ENCODE measurements at regions of chr1 and their contacts with region 1.

Region 1: GRCh38 chr1:44553771-44554170 is 120.5 kb downstream of the TMEM53 start:
- DNase-seq: no peak
- ATAC-seq: peak; percentile 91
- H3K4me3 ChIP-seq: no peak overlapping the region
- H3K27ac ChIP-seq: no peak overlapping the region
- H3K4me1 ChIP-seq: peaks cover 11% of the 10 kb centered on the region
- H3K27me3 ChIP-seq: no peaks in the 10 kb centered on the region
- CTCF ChIP-seq: no peak

Region 2: GRCh38 chr1:44012941-44013609 is 540.7 kb before region 1 on chr1:
- CTCF ChIA-PET with region 1: no interaction called
- POLR2A ChIA-PET with region 1: no interaction called
- in situ Hi-C with region 1: no loop called
- intact Hi-C with region 1: no loop called
- DNase-seq: no peak
- ATAC-seq: no peak
- H3K4me3 ChIP-seq: no peak overlapping the region
- H3K27ac ChIP-seq: no peak overlapping the region
- H3K4me1 ChIP-seq: no peaks in the 10 kb centered on the region
- H3K27me3 ChIP-seq: no peaks in the 10 kb centered on the region
- CTCF ChIP-seq: no peak

Region 3: DNA sequence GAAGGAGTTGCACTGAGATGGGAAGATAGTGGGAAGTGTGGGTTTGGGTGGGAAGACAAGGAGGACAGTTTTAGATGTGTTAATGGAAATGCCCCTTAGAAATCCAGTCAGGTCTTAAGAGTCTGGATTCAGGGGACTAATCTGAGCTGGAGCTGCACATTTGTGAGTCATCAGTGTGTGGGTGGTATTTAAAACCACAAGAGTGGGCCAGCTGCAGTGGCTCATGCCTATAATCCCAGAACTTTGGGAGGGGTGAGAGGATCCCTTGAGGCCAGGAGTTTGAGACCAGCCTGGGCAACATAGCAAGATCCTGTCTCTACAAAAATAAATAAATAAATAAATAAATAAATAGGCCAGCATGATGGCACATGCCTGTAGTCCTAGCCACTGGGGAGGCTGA is 481.6 kb before region 1 on chr1:
- CTCF ChIA-PET with region 1: no interaction called
- POLR2A ChIA-PET with region 1: no interaction called
- in situ Hi-C with region 1: no loop called
- intact Hi-C with region 1: no loop called
- DNase-seq: no peak
- ATAC-seq: no peak
- H3K4me3 ChIP-seq: no peak overlapping the region
- H3K27ac ChIP-seq: no peak overlapping the region
- H3K4me1 ChIP-seq: no peaks in the 10 kb centered on the region
- H3K27me3 ChIP-seq: no peaks in the 10 kb centered on the region
- CTCF ChIP-seq: no peak

Region 4: GRCh38 chr1:44405041-44405797 is 148.6 kb before region 1 on chr1 and contains the start of gene RNF220:
- CTCF ChIA-PET with region 1: no interaction called
- POLR2A ChIA-PET with region 1: no interaction called
- in situ Hi-C with region 1: no loop called
- intact Hi-C with region 1: no loop called
- DNase-seq: no peak
- ATAC-seq: peak; percentile 83
- H3K4me3 ChIP-seq: peak within 1 kb of the TSS; percentile 84 to 87
- H3K27ac ChIP-seq: peak within 1 kb of the TSS; percentile 82
- H3K4me1 ChIP-seq: peaks cover 25% of the 10 kb centered on the region
- H3K27me3 ChIP-seq: no peaks in the 10 kb centered on the region
- CTCF ChIP-seq: no peak; the same call in 1 of the 2 replicates
- total RNA-seq, gene RNF220: 64.9 TPM

Region 5: DNA sequence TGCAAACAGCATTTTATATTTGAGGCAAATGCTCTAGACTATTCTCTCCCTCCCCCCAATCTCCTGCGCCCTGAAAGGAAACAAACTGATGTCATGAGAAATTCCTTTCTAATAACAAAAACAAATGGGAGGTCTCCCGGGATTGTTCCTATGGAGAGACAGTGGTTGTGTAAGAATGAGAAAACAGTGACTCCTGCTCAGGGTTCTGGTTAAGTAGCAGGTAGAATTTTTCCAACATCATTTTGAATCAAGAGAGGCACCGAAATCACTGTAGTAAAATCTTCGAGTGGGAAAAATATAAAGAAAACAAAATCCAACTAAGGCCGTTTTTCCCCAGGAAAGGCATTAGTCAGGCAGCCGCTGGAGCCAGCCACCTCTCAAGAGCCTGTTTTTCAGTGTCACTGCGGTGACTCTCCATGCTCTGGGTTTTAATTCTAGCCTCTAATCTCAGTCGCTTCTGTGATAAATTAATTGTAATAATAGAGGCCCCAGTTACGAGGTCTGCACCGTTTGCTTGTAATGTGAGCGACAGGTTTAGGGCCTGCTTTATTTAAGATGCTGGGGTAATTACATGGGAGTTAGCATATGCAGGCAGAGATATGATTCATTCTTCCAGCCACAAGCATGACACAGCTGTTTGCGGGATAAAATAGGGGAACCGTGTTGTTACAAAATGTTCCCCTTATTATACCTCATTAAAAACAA is 68.4 kb before region 1 on chr1:
- CTCF ChIA-PET with region 1: no interaction called
- POLR2A ChIA-PET with region 1: interaction called, 12 read pairs
- in situ Hi-C with region 1: no loop called
- intact Hi-C with region 1: no loop called
- DNase-seq: peak; percentile 43
- ATAC-seq: peak; percentile 81
- H3K4me3 ChIP-seq: no peak overlapping the region
- H3K27ac ChIP-seq: peak overlapping the region; percentile 62
- H3K4me1 ChIP-seq: peaks cover 15% of the 10 kb centered on the region
- H3K27me3 ChIP-seq: no peaks in the 10 kb centered on the region
- CTCF ChIP-seq: no peak

Region 6: DNA sequence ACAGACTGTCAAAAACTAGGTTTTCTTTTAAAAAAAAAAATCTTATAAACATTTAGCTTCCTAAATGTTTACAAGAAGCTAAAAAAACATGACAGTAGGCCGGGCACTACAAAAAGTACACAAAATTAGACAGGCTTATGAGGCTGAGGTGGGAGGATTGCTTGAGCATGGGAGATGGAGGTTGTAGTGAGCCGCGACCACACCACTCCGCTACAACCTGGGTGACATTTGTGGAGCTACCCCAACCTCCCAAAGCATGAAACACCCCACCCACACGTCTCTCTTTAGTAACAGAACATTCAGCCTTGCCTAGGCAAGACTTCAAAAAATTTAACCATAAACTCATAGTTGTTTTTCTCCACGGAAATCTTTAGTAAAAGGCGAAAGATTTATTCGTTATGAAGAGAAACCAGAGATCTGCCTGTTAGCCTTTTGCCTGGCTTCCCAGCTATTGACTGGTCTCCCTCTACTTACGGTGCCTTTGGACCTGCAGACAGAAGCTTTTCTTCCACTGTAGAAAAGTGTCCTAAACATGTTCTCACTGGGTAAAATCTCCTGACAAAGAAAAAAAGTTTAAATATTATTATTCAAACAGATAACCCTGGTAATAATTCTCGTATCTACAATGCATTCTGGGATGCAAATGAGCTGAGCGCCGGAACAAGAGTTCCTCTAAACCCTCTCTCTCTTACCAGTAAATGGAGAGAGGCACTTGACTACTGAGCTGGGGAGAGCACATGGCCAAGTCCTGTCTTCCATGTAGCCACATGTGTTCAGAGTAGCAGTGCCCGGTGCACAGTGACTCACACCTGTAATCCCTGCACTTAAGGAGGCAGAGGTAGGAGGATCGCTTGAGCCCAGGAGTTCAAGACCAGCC is 168.0 kb after region 1 on chr1:
- CTCF ChIA-PET with region 1: no interaction called
- POLR2A ChIA-PET with region 1: no interaction called
- in situ Hi-C with region 1: no loop called
- intact Hi-C with region 1: no loop called
- DNase-seq: peak; percentile 98
- ATAC-seq: peak; percentile 98
- H3K4me3 ChIP-seq: no peak overlapping the region
- H3K27ac ChIP-seq: peak overlapping the region; percentile 97
- H3K4me1 ChIP-seq: peaks cover 7% of the 10 kb centered on the region
- H3K27me3 ChIP-seq: no peaks in the 10 kb centered on the region
- CTCF ChIP-seq: no peak

Measured in Panc1 (cell line).